ENCODE measurements at regions of chr2 and their contacts with region 1.

Region 1: DNA sequence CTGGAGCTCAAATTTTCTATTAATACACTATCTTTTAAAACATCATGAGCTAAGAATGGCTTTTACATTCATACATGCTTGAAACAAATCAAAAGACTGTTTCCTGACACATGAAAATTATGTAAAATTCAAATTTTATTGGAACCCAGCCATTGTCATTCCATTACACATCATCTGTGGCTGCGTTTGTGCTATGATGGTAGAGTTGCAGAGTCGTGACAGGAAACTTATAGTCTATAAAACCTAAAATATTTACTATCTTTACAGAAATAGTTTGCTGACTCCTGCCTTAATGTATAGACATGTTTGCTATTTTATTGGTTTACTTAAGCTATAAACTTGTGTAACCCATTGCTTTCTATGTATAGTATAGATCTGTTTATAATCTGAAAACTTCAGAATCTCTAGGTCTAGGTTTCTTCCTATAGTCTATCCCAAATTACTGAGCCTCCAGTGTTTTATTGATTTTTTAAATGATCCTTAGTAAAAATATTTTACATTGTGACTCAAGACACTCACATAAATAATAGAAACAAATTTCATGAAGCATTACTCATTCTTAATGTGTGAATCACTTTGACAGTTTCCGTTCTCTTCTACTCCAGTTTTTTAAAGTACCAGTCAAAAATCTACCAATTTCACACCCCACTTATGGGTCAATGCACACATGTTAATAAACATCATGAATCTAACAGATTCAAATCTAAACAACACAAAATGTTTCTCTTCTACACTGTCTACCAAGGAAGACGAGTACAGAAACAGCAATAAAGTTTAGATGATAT is 26.4 kb upstream of the MRPL19 start:
- ATAC-seq: peak in 1 of 8 experiments; percentile 43
- H3K4me3 ChIP-seq: no peak overlapping the region
- H3K27ac ChIP-seq: no peak overlapping the region
- H3K4me1 ChIP-seq: no peaks in the 10 kb centered on the region

Region 2: DNA sequence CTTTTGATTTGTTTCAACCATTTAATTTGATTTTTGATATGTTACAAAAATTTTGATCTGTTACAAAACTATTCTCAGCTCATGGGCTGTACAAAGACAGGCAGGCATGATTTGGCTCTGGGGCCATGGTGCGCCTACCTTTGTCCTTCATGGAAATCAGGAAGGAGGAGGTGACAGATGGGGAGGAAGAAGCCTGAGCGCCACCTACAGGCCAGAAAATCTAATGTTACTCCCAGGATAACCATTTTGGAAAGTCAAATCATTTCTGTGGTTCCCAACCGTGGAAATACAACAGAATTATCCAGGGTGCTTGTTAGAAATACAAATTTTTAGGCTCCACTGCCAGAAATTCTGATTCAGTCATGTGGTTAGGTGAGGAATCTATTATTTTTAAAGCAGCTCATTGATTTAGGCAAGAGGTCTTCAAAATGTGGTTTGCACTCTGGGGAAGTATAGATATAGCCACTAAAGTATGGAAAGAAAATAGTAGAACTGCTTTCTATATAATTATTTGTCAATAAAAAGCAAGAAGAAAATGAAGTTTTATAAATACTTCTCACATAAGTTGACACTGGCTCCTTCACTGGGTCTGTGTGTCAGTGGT is 153.3 kb before region 1 on chr2:
- in situ Hi-C with region 1: loop called in 4 of 9 experiments (anchors 10 to 25 kb)
- ATAC-seq: peak in 3 of 8 experiments; percentile 23 to 53 (median 41)
- H3K4me3 ChIP-seq: no peak overlapping the region
- H3K27ac ChIP-seq: no peak overlapping the region
- H3K4me1 ChIP-seq: peaks cover 4 to 9% of the 10 kb centered on the region in 2 donors

Region 3: DNA sequence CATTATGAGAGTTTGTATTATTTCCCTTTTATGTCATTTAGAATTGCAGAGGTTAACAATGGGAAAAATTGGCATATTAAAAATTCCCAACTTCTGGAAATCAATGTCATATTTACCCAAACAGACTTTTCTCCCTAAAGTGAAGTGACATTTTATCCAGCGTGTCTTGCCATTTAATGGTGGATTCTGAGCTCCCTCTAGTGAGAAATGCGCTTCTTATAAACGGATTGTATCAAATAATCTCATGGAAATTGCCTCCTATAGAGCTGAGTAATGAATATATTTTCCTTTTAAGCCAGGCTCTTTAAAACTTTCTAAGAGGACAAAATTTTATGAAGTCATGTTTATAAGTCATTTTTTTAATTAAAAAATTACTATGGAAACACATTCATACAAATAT is 96.3 kb after region 1 on chr2:
- in situ Hi-C with region 1: no loop called
- ATAC-seq: no peak
- H3K4me3 ChIP-seq: no peak overlapping the region
- H3K27ac ChIP-seq: no peak overlapping the region
- H3K4me1 ChIP-seq: peaks cover 0 to 1% of the 10 kb centered on the region in 2 donors